HCT116 (cell line): ENCODE measurements at regions of chr15 and their contacts with region 1.

Region 1: DNA sequence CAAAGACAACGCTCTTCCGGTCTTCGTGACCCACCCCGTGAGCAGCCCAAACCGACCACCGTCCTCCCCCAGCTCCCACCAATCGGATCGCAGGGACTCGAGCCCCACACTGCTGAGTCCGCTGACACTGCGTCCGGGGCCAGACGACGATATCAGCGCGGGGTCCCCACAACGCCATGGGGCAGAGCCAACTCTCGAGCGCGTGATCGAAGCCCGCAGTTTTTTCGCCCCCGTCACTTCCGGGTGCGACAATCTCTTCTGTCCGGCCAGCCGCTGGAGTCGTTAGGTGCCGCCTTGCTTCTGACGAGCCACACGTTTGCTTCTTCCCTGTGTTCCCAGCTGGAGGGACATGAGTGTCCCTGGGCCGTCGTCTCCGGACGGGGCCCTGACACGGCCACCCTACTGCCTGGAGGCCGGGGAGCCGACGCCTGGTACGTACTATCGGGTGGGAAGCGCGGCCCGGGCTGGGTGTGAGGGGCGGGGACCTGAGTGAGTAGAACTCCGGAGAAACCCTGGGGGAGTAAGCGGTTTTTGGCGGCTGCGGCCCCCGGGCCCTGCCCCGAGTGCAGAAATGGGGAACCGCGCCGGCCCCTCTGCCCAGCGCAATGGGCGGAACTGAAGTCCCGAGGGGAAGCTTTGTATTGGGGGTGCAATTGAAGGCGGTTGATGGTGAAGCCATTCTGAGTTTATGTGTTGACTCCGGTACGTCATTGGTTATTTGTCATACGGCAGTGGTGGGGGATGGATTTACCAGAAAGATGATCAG is at the start of gene BLOC1S6:
- DNase-seq: peak; percentile 86
- ATAC-seq: peak; percentile 83
- H3K4me3 ChIP-seq: peak within 1 kb of the TSS; percentile 74 to 89
- H3K27ac ChIP-seq: peak within 1 kb of the TSS; percentile 93
- H3K4me1 ChIP-seq: peaks cover 7 to 18% of the 10 kb centered on the region in 2 experiments; a peak in 3 of 4 replicates
- H3K27me3 ChIP-seq: no peaks in the 10 kb centered on the region
- CTCF ChIP-seq: no peak
- POLR2A ChIP-seq: peak; percentile 85
- RAD21 ChIP-seq: no peak
- total RNA-seq, gene BLOC1S6: 40.7 TPM

Region 2: DNA sequence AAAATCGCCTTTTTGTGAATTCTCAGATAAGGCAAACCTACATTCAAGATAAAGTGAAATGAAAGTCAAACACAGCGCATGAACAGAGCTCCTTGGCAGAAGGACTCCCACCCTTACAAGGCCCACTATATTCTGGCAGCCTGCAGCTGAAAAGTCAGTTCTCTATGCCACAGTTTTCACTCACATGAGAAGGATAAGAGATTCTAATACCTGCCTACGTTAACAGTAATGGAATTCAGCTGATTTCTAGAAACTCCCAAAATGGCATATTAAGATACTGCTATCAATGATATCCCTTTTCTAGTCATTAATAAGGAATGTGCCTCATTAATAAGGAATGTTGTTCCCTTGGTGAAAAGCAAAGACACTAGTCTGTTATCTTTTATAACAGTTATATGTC is 91.7 kb before region 1 on chr15:
- CTCF ChIA-PET with region 1: no interaction called
- POLR2A ChIA-PET with region 1: no interaction called
- RAD21 ChIA-PET with region 1: no interaction called
- intact Hi-C with region 1: no loop called
- DNase-seq: no peak
- ATAC-seq: no peak
- H3K4me3 ChIP-seq: no peak overlapping the region
- H3K27ac ChIP-seq: no peak overlapping the region
- H3K4me1 ChIP-seq: no peaks in the 10 kb centered on the region
- H3K27me3 ChIP-seq: no peaks in the 10 kb centered on the region
- CTCF ChIP-seq: no peak
- POLR2A ChIP-seq: no peak
- RAD21 ChIP-seq: no peak

Region 3: GRCh38 chr15:45573961-45574629 is 13.2 kb before region 1 on chr15:
- CTCF ChIA-PET with region 1: interaction called, 11 read pairs
- POLR2A ChIA-PET with region 1: interaction called, 6 read pairs
- RAD21 ChIA-PET with region 1: no interaction called
- intact Hi-C with region 1: no loop called
- DNase-seq: peak; percentile 53
- ATAC-seq: peak; percentile 99
- H3K4me3 ChIP-seq: no peak overlapping the region
- H3K27ac ChIP-seq: no peak overlapping the region
- H3K4me1 ChIP-seq: peaks cover 4 to 10% of the 10 kb centered on the region in 2 experiments; a peak in 3 of 4 replicates
- H3K27me3 ChIP-seq: no peaks in the 10 kb centered on the region
- CTCF ChIP-seq: peak; percentile 29 to 79 (median 63); a peak in 4 of 6 replicates
- POLR2A ChIP-seq: no peak
- RAD21 ChIP-seq: peak; percentile 34